PC-3 (cell line): ENCODE measurements at regions of chr19 and their contacts with region 1.

Region 1: DNA sequence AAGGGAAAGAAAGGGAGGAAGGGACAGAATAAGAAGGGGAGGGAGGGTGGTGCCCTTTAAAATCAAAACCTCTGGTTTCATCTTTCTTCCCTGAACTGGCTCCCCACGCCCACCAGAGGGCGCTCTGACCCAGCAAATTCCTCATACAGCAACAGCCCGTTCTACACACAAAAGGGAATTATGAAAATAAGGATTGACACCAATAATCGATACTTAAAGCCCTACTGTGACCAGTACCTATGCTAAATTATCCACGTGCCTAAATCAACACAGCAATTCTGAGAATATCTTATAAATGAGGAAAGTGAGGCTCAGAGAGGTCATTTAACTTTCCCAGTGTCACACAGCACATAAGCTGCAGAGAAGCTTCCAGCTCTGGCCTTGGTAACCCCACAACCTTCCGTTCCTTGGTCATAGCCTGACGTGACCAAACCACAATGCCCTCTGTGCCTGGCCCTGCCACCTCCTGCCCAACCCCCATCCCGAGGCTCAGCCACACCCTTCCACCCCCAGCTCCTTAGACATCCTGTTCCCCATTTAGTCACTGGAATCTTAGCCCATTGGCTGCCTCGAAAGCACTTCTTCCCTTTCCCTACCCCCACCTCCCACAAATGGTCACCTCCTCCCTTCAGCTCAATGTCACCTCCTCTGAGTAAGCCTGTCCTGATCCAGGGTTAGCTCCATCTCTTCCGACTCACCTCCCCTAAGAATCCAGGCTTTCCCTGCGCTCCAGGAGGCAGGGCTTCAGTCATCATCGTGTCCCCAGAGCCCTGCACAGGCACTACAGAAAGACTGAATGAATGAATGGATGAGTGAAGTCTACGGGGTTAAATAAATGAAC is 34.2 kb upstream of the PNMA8B start:
- DNase-seq: peak; percentile 69
- ATAC-seq: peak; percentile 76
- H3K4me3 ChIP-seq: peak overlapping the region; percentile 36; the same call in 1 of the 2 replicates
- H3K27ac ChIP-seq: peak overlapping the region; percentile 67
- H3K4me1 ChIP-seq: peaks cover 11% of the 10 kb centered on the region
- H3K27me3 ChIP-seq: no peaks in the 10 kb centered on the region
- CTCF ChIP-seq: peak; percentile 85

Region 2: DNA sequence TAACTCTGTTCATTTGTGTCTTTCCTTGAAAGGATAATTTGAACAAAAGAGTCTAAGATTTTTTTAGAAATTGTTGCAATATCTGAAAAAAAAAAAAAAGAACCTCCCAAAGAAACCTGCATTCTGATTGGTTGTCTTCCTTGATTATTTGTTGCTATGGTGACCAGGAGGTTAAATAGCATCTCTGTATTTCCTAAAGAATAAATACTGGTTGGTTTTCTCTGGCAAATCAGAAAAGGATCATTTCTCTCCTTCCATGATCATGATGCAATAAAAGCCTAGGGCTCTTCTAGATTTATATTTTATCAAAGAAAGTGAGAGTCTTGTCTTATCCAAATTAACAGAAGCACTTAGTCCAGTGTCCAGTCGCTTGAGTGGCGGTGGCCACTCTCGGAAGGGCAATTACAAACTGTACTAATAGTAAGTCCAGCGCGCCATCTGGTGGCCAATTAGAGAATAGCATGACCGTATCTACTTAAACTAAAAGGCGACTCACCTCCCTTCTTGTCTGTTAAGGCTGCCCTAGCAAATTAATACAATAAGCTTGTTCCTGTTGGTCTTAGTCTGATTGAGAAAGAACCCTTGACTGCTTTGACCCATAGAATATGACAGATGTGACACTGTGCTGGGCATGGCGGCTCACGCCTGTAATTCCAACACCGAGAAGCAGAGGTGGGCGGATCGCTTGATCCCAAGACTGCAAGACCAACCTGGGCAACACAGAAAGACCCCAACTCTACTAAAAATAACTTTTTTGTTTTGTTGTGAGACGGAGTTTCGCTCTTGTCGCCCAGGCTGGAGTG is 12.8 kb after region 1 on chr19:
- CTCF ChIA-PET with region 1: interaction called, 11 read pairs
- POLR2A ChIA-PET with region 1: no interaction called
- intact Hi-C with region 1: loop called (anchors 1 kb)
- DNase-seq: peak; percentile 89
- ATAC-seq: peak; percentile 79
- H3K4me3 ChIP-seq: no peak overlapping the region
- H3K27ac ChIP-seq: no peak overlapping the region
- H3K4me1 ChIP-seq: no peaks in the 10 kb centered on the region
- H3K27me3 ChIP-seq: no peaks in the 10 kb centered on the region
- CTCF ChIP-seq: peak; percentile 89

Region 3: DNA sequence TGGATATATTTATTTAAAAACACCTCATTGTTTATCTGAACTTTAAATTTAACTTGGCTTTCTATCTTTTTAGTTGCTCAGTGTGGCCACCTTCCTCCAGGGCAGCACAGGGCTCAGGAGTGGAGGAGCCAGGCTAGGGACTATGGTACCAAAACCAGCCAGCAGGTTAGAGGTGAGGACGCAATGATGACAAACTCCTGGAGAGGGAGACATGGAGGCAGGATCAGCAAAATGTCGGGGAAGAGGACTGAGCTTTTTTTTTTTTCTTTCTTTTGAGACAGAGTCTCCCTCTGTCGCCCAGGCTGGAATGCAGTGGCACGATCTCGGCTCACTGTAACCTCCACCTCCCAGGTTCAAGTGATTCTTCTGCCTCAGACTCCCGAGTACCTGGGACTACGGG is 41.7 kb after region 1 on chr19:
- CTCF ChIA-PET with region 1: no interaction called
- POLR2A ChIA-PET with region 1: no interaction called
- intact Hi-C with region 1: loop called (anchors 1 kb)
- DNase-seq: peak; percentile 38
- ATAC-seq: peak; percentile 64; the same call in 1 of the 2 replicates
- H3K4me3 ChIP-seq: no peak overlapping the region
- H3K27ac ChIP-seq: no peak overlapping the region
- H3K4me1 ChIP-seq: no peaks in the 10 kb centered on the region
- H3K27me3 ChIP-seq: no peaks in the 10 kb centered on the region
- CTCF ChIP-seq: peak; percentile 25; the same call in 1 of the 2 replicates